ENCODE measurements at regions of chr7 and their contacts with region 1.

Region 1: DNA sequence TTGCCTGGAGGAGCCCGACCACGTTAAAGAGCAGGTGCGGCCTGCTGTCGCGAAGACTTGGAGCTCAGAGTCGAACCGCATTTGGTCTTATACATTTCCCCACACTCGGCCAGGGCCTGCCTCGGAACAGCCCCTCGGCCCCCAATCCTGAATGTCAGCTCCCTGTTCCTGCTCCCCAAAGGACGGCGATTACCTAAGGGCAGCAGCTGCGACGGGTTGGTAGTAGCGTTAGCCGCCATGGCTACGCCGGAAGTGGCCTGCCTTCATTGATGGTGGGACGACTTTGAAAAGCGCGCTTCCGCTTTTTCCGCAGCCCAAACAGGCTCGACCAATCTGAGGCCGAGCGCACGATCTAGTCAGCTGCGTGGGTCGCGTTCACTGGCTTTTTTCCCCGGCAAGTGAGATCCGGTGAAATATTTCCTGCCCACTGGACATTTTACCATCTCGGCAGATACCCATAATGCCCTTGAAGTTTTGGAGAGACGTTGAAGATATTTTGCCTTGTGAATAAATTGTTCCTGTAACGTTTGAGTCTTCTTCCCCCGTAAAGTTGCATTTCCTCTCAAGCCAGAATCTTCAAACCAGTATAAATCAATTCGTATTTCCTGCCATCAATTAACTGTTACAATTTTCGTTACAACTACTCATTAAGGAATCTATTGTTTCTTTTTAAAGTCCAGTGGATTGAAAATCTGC is at the start of gene LSM5:
- DNase-seq: peak; percentile 94
- H3K4me3 Mint-ChIP-seq: peak within 1 kb of the TSS; percentile 86
- H3K27ac Mint-ChIP-seq: peak within 1 kb of the TSS; percentile 95
- H3K4me1 Mint-ChIP-seq: peaks cover 27% of the 10 kb centered on the region
- H3K27me3 Mint-ChIP-seq: no peaks in the 10 kb centered on the region
- total RNA-seq, gene LSM5: 132 to 141 TPM

Region 2: GRCh38 chr7:32561613-32562012 is 71.3 kb after region 1 on chr7:
- CTCF ChIA-PET with region 1: no interaction called
- intact Hi-C with region 1: loop called (anchors 2 kb)
- DNase-seq: no peak
- H3K4me3 Mint-ChIP-seq: no peak overlapping the region
- H3K27ac Mint-ChIP-seq: no peak overlapping the region
- H3K4me1 Mint-ChIP-seq: peaks cover 16% of the 10 kb centered on the region
- H3K27me3 Mint-ChIP-seq: no peaks in the 10 kb centered on the region

Region 3: GRCh38 chr7:32639122-32639521 is 148.8 kb after region 1 on chr7:
- CTCF ChIA-PET with region 1: no interaction called
- intact Hi-C with region 1: loop called (anchors 1 kb)
- DNase-seq: no peak
- H3K4me3 Mint-ChIP-seq: no peak overlapping the region
- H3K27ac Mint-ChIP-seq: no peak overlapping the region
- H3K4me1 Mint-ChIP-seq: peaks cover 7% of the 10 kb centered on the region
- H3K27me3 Mint-ChIP-seq: peaks cover 5% of the 10 kb centered on the region

Region 4: GRCh38 chr7:33040803-33041516 is 550.7 kb after region 1 on chr7:
- CTCF ChIA-PET with region 1: no interaction called
- intact Hi-C with region 1: loop called (anchors 5 kb)
- DNase-seq: peak; percentile 84
- H3K4me3 Mint-ChIP-seq: peak overlapping the region; percentile 69
- H3K27ac Mint-ChIP-seq: peak overlapping the region; percentile 86
- H3K4me1 Mint-ChIP-seq: peaks cover 47% of the 10 kb centered on the region
- H3K27me3 Mint-ChIP-seq: no peaks in the 10 kb centered on the region

Region 5: GRCh38 chr7:33128990-33129805 is 638.9 kb after region 1 on chr7 and contains the start of gene BBS9:
- CTCF ChIA-PET with region 1: no interaction called
- intact Hi-C with region 1: loop called (anchors 1 kb)
- DNase-seq: peak; percentile 95
- H3K4me3 Mint-ChIP-seq: peak within 1 kb of the TSS; percentile 93
- H3K27ac Mint-ChIP-seq: peak within 1 kb of the TSS; percentile 72
- H3K4me1 Mint-ChIP-seq: peaks cover 21% of the 10 kb centered on the region
- H3K27me3 Mint-ChIP-seq: no peaks in the 10 kb centered on the region
- total RNA-seq, gene BBS9: 7.0 to 7.4 TPM